HEK293 (cell line): ENCODE measurements at regions of chr19 and their contacts with region 1.

Region 1: GRCh38 chr19:38989066-38989605 is 13.6 kb upstream of the FBXO17 start:
- H3K4me3 ChIP-seq: no peak overlapping the region
- H3K27ac ChIP-seq: peak overlapping the region; percentile 74
- H3K4me1 ChIP-seq: peaks cover 12% of the 10 kb centered on the region
- CTCF ChIP-seq: no peak

Region 2: DNA sequence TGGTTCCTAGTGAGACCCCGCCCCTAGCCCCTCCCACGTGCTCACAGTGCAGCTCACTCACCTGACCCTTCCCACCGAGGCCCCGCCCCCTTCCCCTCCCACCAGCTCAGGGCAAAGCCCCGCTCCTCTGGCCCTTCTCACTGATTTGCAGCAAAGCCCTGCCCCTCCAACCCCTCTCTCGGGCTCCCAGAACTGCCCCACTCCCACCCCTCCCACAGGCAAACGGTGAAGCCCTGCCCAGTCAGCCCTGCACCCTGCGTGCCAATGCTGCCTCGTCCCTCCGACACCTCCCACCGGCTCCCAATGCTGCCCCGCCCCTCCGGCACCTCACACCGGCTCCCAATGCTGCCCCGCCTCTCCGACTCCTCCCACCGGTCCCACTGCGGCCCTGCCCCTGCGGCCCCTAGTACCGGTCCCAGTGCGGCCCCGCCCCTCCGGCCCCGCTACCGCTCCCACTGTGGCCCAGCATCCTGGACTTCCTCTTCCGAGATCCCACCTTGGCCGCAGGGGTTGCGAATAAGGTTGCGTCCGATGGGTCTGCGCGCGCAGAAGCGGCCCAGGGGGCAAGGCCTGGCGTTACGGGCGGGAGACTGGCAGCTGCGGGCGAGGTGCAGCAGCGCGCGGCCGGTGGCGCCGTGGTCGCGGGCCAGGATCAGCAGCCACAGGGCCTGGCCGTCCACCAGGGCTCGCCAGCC is 42.4 kb after region 1 on chr19:
- CTCF ChIA-PET with region 1: no interaction called
- POLR2A ChIA-PET with region 1: interaction called, 20 read pairs
- H3K4me3 ChIP-seq: peak overlapping the region; percentile 58
- H3K27ac ChIP-seq: peak overlapping the region; percentile 93
- H3K4me1 ChIP-seq: peaks cover 26% of the 10 kb centered on the region
- CTCF ChIP-seq: peak; percentile 78; the same call in 1 of the 2 replicates